Vagina (tissue), 2 donors: ENCODE measurements at regions of chr14 and their contacts with region 1.

Region 1: DNA sequence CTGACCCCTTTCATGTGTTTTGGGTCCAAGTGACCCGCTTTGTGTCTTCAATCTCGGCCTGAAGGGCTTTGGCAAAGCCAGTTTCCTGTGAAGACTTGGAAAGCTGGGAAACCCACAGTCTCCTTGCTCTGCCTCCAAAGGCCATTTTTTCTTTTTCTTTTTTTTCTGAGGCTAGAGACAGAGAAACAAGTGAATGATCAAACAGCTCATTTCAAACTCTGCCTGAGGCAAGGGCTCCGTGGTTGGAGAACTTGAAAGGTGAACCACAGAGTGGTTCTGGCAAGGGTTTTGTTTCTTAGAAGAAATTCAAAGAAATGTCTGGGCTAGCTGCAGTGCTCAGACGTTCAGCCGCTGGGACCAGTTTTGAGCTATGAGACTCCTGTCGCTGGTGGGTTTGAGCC is 62.7 kb downstream of the ERH start:
- DNase-seq: no peak
- H3K4me3 ChIP-seq: no peak overlapping the region
- H3K27ac ChIP-seq: no peak overlapping the region
- H3K4me1 ChIP-seq: peaks cover 7% of the 10 kb centered on the region
- H3K27me3 ChIP-seq: no peaks in the 10 kb centered on the region
- CTCF ChIP-seq: no peak
- POLR2A ChIP-seq: no peak

Region 2: DNA sequence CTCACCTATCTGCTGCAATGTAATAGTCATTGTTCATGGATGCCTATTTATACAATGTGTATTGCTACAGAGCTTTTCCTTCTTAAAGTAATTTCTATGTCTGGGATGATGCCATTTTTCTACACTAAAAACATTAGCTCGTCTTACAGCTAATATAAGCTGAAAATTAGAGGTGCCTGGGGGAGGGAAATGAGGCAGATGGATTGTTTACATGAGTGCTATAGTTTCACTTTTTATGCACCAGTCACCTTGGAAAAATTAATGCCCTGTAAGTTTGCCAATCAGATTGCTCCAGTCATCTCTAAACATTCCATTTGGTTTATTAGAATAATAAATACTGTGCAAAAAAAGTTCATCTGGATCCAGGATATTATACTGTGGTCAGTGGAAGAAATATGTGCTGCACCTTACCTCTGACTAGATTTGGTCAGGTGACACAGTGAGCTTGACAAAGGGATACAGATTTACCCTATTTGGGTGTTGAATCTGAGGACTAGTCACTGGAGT is 1079.6 kb before region 1 on chr14:
- intact Hi-C with region 1: loop called (anchors 5 kb)
- DNase-seq: no peak
- H3K4me3 ChIP-seq: no peak overlapping the region
- H3K27ac ChIP-seq: no peak overlapping the region
- H3K4me1 ChIP-seq: peaks cover 32% of the 10 kb centered on the region
- H3K27me3 ChIP-seq: no peaks in the 10 kb centered on the region
- CTCF ChIP-seq: no peak
- POLR2A ChIP-seq: no peak

Region 3: DNA sequence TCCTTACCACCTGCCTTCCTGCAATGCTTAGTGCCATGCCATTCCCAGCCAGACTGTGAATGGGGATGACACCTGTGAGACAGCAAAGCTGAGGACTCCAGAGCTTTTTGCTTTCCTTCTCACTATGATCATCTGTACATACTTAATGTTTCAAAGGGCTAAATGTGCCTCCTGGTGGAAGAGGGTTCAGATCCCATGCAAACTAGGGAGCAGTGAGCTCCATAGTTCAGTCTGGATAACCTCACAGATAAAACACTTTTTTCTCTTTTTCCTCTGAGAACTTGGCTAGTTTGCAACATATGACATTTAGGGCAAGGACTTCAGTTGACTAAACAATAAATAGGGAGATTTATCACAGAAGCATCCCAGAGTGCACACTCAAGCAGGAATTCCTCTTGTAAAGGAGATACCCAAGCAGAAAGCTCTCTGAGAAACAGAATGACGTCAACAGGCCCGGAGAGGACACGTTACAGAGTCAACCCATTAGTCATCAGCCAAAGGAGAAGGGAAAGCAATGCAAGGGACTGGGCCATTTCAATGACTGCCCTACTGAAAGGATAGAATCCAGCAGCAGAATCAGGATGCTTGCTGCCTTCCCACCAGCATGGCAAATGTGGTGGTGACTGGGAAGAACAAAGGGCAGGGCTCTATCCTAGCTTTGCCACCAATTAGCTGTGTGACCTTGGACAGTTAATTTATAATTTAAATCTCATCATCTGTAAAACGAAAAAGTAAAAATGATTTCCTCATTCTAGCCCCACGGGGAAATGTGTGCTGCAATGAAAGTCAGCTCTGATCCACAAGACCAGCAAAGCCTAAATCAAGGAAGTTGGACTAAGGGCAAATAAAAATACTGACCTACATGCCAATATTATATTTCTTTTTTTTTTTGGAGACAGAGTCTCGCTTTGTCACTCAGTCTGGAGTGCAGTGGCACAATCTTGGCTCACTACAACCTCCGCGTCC is 275.4 kb before region 1 on chr14:
- intact Hi-C with region 1: no loop called
- DNase-seq: no peak
- H3K4me3 ChIP-seq: no peak overlapping the region
- H3K27ac ChIP-seq: peak overlapping the region; percentile 35
- H3K4me1 ChIP-seq: no peaks in the 10 kb centered on the region
- H3K27me3 ChIP-seq: no peaks in the 10 kb centered on the region
- CTCF ChIP-seq: peak in 1 of 3 experiments; percentile 14
- POLR2A ChIP-seq: no peak

Region 4: DNA sequence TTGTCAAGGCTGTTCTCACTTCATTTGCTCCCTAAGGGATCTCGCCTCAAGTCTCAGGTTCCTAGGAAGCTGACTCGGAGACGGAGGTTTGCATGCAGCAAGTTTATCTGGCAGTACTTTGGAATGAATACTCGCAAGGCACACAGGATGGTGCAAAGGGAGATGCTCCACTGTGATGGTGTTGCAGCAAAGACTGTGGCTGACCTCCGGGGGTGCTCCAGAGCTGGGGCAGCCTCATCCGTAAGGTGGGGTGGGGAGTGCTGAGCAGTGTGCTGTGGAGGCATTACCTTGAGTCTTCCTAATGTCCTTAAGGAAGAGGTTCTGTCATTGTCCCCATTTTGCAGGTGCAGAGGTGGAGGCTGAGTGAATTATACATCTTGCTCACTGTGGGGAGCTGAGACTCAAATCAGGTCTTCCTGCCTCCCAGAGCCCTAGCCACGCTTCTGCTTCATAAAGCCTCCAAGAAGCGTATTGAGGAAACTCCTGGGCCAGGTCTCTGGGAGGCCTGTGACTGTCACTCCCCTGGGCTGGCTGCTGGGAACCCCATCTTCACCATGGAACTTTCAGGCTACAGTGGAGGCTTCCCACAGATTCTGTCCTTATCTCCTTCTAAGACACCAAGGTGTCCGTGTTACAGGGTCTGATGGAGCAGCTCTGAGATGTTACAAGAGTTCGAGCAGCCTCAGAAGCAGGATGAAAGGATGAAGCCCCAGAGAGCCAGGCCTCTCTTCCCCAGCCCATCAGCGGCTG is 35.9 kb before region 1 on chr14:
- intact Hi-C with region 1: no loop called
- DNase-seq: peak; percentile 65 to 79
- H3K4me3 ChIP-seq: no peak overlapping the region
- H3K27ac ChIP-seq: no peak overlapping the region
- H3K4me1 ChIP-seq: no peaks in the 10 kb centered on the region
- H3K27me3 ChIP-seq: no peaks in the 10 kb centered on the region
- CTCF ChIP-seq: no peak
- POLR2A ChIP-seq: no peak

Region 5: GRCh38 chr14:69413483-69413882 is 78.1 kb after region 1 on chr14:
- intact Hi-C with region 1: no loop called
- DNase-seq: no peak
- H3K4me3 ChIP-seq: no peak overlapping the region
- H3K27ac ChIP-seq: no peak overlapping the region
- H3K4me1 ChIP-seq: no peaks in the 10 kb centered on the region
- H3K27me3 ChIP-seq: no peaks in the 10 kb centered on the region
- CTCF ChIP-seq: no peak
- POLR2A ChIP-seq: no peak